ENCODE measurements at regions of chr12 and their contacts with region 1.

Region 1: DNA sequence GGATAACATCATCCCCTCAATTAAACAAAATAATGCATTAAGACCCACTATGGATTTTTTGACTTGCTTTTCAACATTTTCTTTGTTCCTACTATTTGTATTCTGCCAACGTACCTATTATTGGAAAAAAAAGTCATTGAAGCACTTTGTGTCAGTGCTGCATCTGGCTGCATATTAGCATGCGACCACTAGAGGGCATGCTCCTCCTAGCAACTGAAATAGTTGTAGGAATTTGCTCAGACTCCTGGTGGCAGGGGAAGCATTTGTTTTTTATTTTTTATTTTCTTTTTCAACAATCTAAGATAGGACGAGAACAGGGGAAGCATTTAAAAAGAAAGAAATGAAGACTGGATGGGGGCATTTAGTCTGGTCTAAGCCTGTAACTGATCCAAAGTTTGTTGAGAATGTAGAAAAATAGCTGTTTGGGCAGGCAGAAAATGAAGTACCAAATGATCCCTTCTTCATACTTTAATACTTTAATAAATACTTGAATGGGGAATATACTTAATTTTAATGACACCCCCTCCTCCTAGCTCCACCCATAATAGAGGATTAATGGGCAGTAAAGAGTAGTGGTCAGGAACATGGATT is 14.5 kb upstream of the CLEC4A start:
- DNase-seq: peak; percentile 73
- H3K4me3 ChIP-seq: no peak overlapping the region
- H3K27ac ChIP-seq: no peak overlapping the region
- H3K4me1 ChIP-seq: peaks cover 0 to 4% (median 0%) of the 10 kb centered on the region in 4 donors
- H3K27me3 ChIP-seq: no peaks in the 10 kb centered on the region
- CTCF ChIP-seq: peak; percentile 92 to 98 (median 98)
- EP300 ChIP-seq: no peak
- POLR2A ChIP-seq: no peak

Region 2: GRCh38 chr12:7542813-7543498 is 565.9 kb before region 1 on chr12:
- in situ Hi-C with region 1: no loop called
- intact Hi-C with region 1: no loop called
- DNase-seq: no peak
- H3K4me3 ChIP-seq: no peak overlapping the region
- H3K27ac ChIP-seq: peak overlapping the region in 3 of 4 donors; percentile 19 to 52 (median 25)
- H3K4me1 ChIP-seq: no peaks in the 10 kb centered on the region
- H3K27me3 ChIP-seq: no peaks in the 10 kb centered on the region
- CTCF ChIP-seq: no peak
- EP300 ChIP-seq: no peak
- POLR2A ChIP-seq: no peak

Region 3: GRCh38 chr12:8226355-8226754 is 117.5 kb after region 1 on chr12:
- in situ Hi-C with region 1: loop called in 2 of 4 experiments (anchors 25 kb)
- intact Hi-C with region 1: no loop called
- DNase-seq: no peak
- H3K4me3 ChIP-seq: no peak overlapping the region
- H3K27ac ChIP-seq: no peak overlapping the region
- H3K4me1 ChIP-seq: peaks cover 0 to 3% (median 0%) of the 10 kb centered on the region in 4 donors
- H3K27me3 ChIP-seq: no peaks in the 10 kb centered on the region
- CTCF ChIP-seq: no peak
- EP300 ChIP-seq: no peak
- POLR2A ChIP-seq: no peak